ENCODE measurements at regions of chr1 and their contacts with region 1.

Region 1: DNA sequence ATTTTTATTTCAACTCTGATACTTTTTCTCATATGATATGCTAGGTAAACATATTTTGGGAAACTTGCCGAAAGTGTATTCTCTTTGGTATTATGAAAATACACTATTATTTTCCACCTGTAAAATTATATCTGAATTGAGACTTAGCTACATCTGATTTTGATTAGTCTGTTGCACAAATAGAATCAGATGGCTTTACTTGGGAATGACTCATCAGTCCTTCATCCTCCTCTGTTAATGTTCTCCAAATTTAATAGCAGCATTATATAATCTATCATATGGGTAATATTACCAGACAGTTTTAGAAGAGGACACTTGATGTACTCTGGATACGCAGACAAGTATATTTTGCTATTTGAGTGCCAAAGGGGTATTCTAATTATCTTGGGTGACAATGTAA is 245.3 kb downstream of the CTH start:
- DNase-seq: no peak
- H3K4me3 ChIP-seq: no peak overlapping the region
- H3K27ac ChIP-seq: no peak overlapping the region
- H3K4me1 ChIP-seq: no peaks in the 10 kb centered on the region
- H3K27me3 ChIP-seq: no peaks in the 10 kb centered on the region
- CTCF ChIP-seq: no peak
- EP300 ChIP-seq: no peak
- POLR2A ChIP-seq: no peak

Region 2: GRCh38 chr1:69081668-69082067 is 1574.7 kb before region 1 on chr1:
- in situ Hi-C with region 1: no loop called
- intact Hi-C with region 1: loop called (anchors 10 kb)
- DNase-seq: no peak
- H3K4me3 ChIP-seq: no peak overlapping the region
- H3K27ac ChIP-seq: no peak overlapping the region
- H3K4me1 ChIP-seq: no peaks in the 10 kb centered on the region
- H3K27me3 ChIP-seq: no peaks in the 10 kb centered on the region
- CTCF ChIP-seq: no peak
- EP300 ChIP-seq: no peak
- POLR2A ChIP-seq: no peak

Region 3: DNA sequence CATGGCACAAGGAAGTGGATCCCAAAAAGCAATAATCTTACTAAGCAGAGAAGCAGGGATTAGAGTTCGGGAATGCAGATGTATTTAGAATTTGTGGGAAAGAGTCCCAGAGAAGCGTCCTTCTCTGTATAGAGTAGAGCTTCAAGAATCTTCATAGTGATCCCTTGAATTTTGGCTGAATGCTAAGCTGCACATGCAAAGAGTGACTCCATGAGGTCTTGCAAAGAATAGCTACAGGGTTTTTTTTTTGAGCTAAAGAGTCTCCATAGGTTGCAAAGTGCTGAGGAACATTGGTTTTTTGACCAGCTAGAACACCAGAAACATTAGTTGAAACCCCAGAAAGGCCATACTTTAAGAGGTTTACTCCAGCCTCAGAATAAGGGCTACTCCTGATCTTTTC is 38.6 kb before region 1 on chr1:
- in situ Hi-C with region 1: no loop called
- intact Hi-C with region 1: no loop called
- DNase-seq: no peak
- H3K4me3 ChIP-seq: no peak overlapping the region
- H3K27ac ChIP-seq: no peak overlapping the region
- H3K4me1 ChIP-seq: no peaks in the 10 kb centered on the region
- H3K27me3 ChIP-seq: no peaks in the 10 kb centered on the region
- CTCF ChIP-seq: no peak
- EP300 ChIP-seq: no peak
- POLR2A ChIP-seq: no peak

Region 4: DNA sequence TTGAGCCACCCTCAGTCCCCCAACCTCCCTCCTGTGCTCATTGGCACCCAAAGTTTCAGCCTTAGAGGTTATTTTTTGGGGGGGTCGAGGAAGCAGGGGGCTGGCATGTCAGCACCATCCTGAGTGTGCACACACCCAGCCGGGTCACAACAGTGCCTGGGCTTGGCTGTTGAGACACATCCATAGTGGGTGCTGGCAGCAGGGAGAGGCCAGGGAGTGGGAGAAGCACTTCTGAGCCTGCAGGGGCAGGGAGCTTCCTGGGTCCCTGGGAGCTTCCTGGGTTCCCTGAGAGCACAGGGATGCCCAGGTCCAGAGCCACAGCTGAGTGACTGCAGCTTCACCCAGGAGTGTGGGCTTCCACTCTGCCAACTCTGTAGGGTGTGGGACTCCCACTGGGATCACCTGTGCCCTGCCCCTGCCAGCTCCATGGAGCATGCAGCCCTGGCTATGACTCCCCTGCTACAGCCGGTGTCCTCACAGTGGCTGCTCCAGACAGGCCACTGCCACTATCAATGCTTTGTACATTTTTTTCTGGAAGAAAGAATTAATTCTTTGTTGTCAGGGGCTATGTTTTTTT is 150.8 kb after region 1 on chr1:
- in situ Hi-C with region 1: no loop called
- intact Hi-C with region 1: no loop called
- DNase-seq: no peak
- H3K4me3 ChIP-seq: no peak overlapping the region
- H3K27ac ChIP-seq: no peak overlapping the region
- H3K4me1 ChIP-seq: no peaks in the 10 kb centered on the region
- H3K27me3 ChIP-seq: no peaks in the 10 kb centered on the region
- CTCF ChIP-seq: no peak
- EP300 ChIP-seq: no peak
- POLR2A ChIP-seq: no peak